AG04449 (cell line): ENCODE measurements at regions of chr12 and their contacts with region 1.

Region 1: GRCh38 chr12:32312049-32312670 is 87.2 kb upstream of the FGD4 start:
- DNase-seq: peak; percentile 14
- H3K4me3 ChIP-seq: no peak overlapping the region
- CTCF ChIP-seq: peak; percentile 32

Region 2: GRCh38 chr12:31647086-31647491 is 665.1 kb before region 1 on chr12:
- CTCF ChIA-PET with region 1: interaction called, 89 read pairs
- POLR2A ChIA-PET with region 1: no interaction called
- DNase-seq: no peak
- H3K4me3 ChIP-seq: no peak overlapping the region
- CTCF ChIP-seq: no peak

Region 3: GRCh38 chr12:31655208-31655607 is 657.0 kb before region 1 on chr12:
- CTCF ChIA-PET with region 1: interaction called, 89 read pairs
- POLR2A ChIA-PET with region 1: no interaction called
- DNase-seq: no peak
- H3K4me3 ChIP-seq: no peak overlapping the region
- CTCF ChIP-seq: no peak

Region 4: DNA sequence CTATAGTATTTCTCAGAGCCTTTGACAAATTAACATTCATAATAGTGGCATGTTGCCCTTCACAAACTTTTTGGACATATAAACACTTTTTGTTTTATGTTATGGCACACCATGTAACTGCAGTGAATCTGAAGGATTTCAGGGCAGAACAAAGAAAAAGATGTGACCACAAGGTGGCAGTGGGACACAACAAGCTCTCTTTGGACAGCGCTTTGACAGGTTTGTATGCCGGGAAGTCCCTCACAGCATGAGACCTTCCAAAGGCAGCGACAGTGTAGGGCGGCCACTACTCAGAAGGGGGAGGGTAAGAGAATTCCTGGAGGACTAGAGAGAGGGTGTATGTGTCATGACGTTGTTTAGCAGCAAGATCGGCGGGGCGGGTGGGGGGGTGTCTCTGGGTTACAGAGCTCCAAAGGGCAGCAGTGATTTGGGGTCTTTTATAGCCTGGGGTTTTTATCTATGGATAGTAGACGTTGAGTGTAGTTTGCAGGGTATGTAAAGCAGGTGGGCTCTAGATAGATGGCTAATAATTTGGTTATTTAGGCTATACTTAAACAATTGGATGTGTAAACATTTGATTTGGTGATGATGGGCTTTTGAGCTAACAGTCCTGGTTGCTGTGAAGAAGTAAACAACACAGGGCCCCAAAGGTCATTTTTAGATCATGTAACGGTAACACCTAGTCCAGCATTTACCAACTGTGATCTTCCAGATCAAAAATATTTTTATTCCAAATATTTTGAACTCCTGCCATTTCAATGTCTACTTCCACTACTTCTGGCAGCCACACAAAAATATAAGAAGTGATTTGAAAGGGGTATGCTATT is 629.8 kb before region 1 on chr12:
- CTCF ChIA-PET with region 1: interaction called, 21 read pairs
- POLR2A ChIA-PET with region 1: no interaction called
- DNase-seq: peak; percentile 31
- H3K4me3 ChIP-seq: no peak overlapping the region
- CTCF ChIP-seq: peak; percentile 68

Region 5: GRCh38 chr12:32032205-32032810 is 279.9 kb before region 1 on chr12:
- CTCF ChIA-PET with region 1: interaction called, 12 read pairs
- POLR2A ChIA-PET with region 1: no interaction called
- DNase-seq: no peak
- H3K4me3 ChIP-seq: no peak overlapping the region
- CTCF ChIP-seq: no peak

Region 6: GRCh38 chr12:32322354-32322753 is 10.2 kb after region 1 on chr12:
- CTCF ChIA-PET with region 1: interaction called, 25 read pairs
- POLR2A ChIA-PET with region 1: no interaction called
- DNase-seq: no peak
- H3K4me3 ChIP-seq: no peak overlapping the region
- CTCF ChIP-seq: no peak